ENCODE measurements at regions of chr18 and their contacts with region 1.

Region 1: DNA sequence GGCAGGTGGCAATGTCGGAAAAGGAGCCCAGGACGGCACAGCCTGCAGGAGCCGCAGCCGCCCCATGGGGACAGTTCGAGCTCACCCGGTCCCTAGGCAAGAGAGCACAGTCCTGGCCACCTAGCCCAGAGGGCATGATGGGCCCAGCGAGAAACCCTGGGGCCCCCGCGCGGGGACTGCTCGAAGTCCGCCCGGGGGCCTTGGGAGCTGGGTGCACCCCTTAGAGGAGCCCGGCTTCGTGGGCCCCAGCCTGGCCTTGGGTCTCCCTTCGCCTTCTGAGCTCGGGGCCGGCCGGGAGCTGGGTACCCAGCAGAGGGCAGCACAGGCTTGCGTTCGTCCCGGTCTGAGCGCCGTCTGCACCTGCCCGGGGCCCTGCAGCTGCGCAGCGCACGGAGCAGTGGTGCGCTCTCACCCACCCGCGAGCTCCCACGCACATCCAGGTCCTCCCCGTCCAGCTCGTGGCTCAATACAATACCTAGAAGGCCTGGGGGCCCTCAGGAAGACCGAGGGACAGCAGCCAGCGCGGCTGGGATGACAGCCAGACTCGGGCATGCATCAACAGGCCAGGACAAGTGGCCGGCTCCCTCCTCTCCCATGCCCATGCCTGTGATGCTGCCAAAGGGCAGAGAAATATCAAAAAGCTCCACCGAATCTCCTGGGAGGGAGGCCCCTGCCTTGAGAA is 96.2 kb upstream of the ZNF532 start:
- DNase-seq: no peak
- H3K4me3 ChIP-seq: peak overlapping the region; percentile 42
- CTCF ChIP-seq: peak; percentile 93

Region 2: DNA sequence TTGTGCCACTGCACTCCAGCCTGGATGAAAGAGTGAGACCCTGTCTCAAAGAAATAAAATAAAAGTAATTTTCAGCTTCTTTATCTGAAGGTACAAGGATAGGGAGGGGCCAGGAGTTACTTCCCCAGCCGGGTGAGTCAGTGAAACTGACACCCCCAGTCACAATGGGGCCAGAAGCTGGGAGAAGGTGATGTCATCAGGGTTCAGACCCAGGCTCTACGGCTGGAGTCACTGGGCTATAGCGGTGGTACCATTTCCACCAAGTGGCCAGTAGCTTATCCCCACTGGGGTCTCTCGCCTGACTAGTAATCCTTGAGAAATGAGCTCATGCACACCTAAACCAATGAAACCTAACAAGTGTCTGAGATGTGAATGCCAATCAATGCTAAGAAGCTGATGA is 247.5 kb before region 1 on chr18:
- CTCF ChIA-PET with region 1: interaction called, 168 read pairs
- POLR2A ChIA-PET with region 1: no interaction called
- DNase-seq: no peak
- H3K4me3 ChIP-seq: no peak overlapping the region
- CTCF ChIP-seq: no peak

Region 3: DNA sequence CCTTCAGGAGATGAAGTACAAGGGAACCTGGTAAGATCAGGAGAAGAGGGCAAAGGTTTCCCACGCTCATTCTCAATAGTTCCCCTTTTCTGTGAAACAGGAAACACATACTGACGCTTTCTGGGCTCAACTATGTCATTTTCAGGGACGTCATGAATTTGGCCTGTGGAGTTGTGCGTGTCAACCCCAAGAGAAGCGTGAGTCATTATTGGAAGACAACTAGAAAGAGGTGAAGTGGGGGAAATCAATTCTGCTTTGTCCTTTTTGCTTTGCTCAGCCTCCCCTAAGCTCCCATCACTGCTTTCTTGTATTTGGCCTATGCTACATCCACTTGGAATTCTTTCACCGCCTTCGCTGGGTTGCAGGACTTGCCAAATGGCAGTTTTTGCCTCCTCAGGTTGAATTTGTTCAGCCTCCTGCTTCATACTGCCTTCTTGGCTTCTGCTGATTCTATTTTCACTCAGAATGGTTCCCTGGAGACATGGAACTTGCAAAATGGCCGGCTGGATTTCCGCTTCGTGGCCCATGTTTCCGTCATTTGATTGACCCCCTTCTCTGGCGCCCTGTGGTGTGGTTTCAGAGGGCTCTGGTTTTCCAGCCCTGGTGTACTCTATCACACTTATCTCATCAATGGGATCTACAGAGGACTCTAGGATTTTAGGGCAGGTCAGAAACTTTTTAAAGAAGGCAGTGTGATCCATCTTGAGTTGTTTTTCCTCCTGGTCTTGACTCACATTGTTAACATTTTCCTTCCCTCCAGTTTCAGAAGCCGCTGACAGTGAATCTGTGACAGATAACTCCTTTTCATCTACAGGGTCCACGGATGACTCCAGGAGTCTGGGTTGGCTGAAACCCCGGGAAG is 232.9 kb before region 1 on chr18:
- CTCF ChIA-PET with region 1: interaction called, 168 read pairs
- POLR2A ChIA-PET with region 1: no interaction called
- DNase-seq: no peak
- H3K4me3 ChIP-seq: no peak overlapping the region
- CTCF ChIP-seq: no peak

Region 4: DNA sequence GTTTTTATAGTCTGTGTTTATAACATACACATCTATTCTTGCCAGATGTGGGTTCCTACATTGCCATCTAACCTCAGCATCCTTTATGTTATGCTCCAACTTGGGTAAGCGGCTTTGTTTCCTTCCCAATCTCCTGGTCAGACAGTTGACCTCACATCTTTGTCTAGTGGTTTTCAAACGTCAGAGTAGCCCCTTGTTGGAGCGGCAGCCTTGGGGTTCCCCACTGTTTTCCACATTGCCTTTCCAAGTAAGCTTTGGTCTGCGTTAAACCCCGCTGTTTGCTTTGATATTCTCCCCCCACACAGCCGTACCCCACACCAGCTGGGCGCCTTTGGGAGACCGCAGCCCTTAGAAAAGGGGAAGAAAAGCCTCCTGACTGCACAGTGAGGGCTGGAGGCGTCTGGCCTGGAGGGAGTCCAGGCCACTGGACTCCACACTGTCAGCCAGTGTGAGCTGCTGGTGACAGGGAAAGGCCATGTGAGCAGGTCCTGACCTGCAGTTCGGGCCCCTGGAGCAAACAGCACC is 13.8 kb before region 1 on chr18:
- CTCF ChIA-PET with region 1: interaction called, 145 read pairs
- POLR2A ChIA-PET with region 1: no interaction called
- DNase-seq: no peak
- H3K4me3 ChIP-seq: no peak overlapping the region
- CTCF ChIP-seq: no peak

Region 5: GRCh38 chr18:58806826-58807714 is 38.6 kb after region 1 on chr18:
- CTCF ChIA-PET with region 1: no interaction called
- POLR2A ChIA-PET with region 1: no interaction called
- DNase-seq: no peak
- H3K4me3 ChIP-seq: no peak overlapping the region
- CTCF ChIP-seq: no peak

Region 6: DNA sequence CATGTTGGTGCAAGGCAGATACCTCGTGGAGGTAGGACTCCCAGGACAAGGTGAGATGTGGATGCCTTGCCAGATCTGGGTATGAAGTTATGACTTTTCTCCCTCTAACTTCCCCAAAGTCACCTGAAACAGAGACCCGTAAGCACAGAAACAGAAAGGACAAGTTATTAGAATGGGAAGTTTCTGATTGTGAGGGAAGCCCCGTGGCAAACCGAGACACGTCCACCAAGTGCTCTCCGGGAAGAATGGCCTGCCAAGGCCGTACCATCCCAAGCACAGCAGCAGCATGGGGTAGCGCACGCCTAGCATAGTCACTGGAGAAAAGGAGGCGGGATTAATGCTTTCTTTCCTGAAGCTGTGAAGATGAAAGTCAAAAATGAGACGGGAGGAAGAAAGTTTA is 206.9 kb after region 1 on chr18:
- CTCF ChIA-PET with region 1: no interaction called
- POLR2A ChIA-PET with region 1: no interaction called
- DNase-seq: no peak
- H3K4me3 ChIP-seq: no peak overlapping the region
- CTCF ChIP-seq: no peak

Region 7: GRCh38 chr18:59056706-59057492 is 288.5 kb after region 1 on chr18:
- CTCF ChIA-PET with region 1: interaction called, 1,272 read pairs
- POLR2A ChIA-PET with region 1: no interaction called
- DNase-seq: no peak
- H3K4me3 ChIP-seq: no peak overlapping the region
- CTCF ChIP-seq: peak; percentile 86

Region 8: GRCh38 chr18:59075923-59076322 is 307.5 kb after region 1 on chr18:
- CTCF ChIA-PET with region 1: interaction called, 1,272 read pairs
- POLR2A ChIA-PET with region 1: no interaction called
- DNase-seq: no peak
- H3K4me3 ChIP-seq: no peak overlapping the region
- CTCF ChIP-seq: no peak